ENCODE measurements at regions of chr7 and their contacts with region 1.

Region 1: GRCh38 chr7:25125137-25125946 is at the start of gene CYCS:
- DNase-seq: peak; percentile 100
- H3K4me3 Mint-ChIP-seq: peak within 1 kb of the TSS; percentile 100
- H3K27ac Mint-ChIP-seq: peak within 1 kb of the TSS; percentile 100
- H3K4me1 Mint-ChIP-seq: peaks cover 24% of the 10 kb centered on the region
- H3K27me3 Mint-ChIP-seq: no peaks in the 10 kb centered on the region
- total RNA-seq, gene CYCS: 199 to 207 TPM

Region 2: GRCh38 chr7:25028370-25029021 is 96.8 kb before region 1 on chr7:
- CTCF ChIA-PET with region 1: no interaction called
- POLR2A ChIA-PET with region 1: no interaction called
- intact Hi-C with region 1: loop called (anchors 2 kb)
- DNase-seq: peak; percentile 42
- H3K4me3 Mint-ChIP-seq: peak overlapping the region; percentile 0
- H3K27ac Mint-ChIP-seq: peak overlapping the region; percentile 70
- H3K4me1 Mint-ChIP-seq: peaks cover 48% of the 10 kb centered on the region
- H3K27me3 Mint-ChIP-seq: no peaks in the 10 kb centered on the region

Region 3: GRCh38 chr7:25148772-25149575 is 23.6 kb after region 1 on chr7:
- CTCF ChIA-PET with region 1: interaction called, 4 read pairs
- POLR2A ChIA-PET with region 1: no interaction called
- intact Hi-C with region 1: loop called (anchors 2 kb)
- DNase-seq: no peak
- H3K4me3 Mint-ChIP-seq: no peak overlapping the region
- H3K27ac Mint-ChIP-seq: no peak overlapping the region
- H3K4me1 Mint-ChIP-seq: peaks cover 15% of the 10 kb centered on the region
- H3K27me3 Mint-ChIP-seq: no peaks in the 10 kb centered on the region

Region 4: GRCh38 chr7:25158966-25159365 is 33.6 kb after region 1 on chr7:
- CTCF ChIA-PET with region 1: interaction called, 5 read pairs
- POLR2A ChIA-PET with region 1: no interaction called
- intact Hi-C with region 1: loop called (anchors 2 kb)
- DNase-seq: no peak
- H3K4me3 Mint-ChIP-seq: no peak overlapping the region
- H3K27ac Mint-ChIP-seq: no peak overlapping the region
- H3K4me1 Mint-ChIP-seq: peaks cover 2% of the 10 kb centered on the region
- H3K27me3 Mint-ChIP-seq: no peaks in the 10 kb centered on the region

Region 5: GRCh38 chr7:25179771-25180591 is 54.6 kb after region 1 on chr7:
- CTCF ChIA-PET with region 1: interaction called, 5 read pairs
- POLR2A ChIA-PET with region 1: interaction called, 3 read pairs
- intact Hi-C with region 1: loop called (anchors 1 kb)
- DNase-seq: peak; percentile 96
- H3K4me3 Mint-ChIP-seq: peak overlapping the region; percentile 79
- H3K27ac Mint-ChIP-seq: peak overlapping the region; percentile 73
- H3K4me1 Mint-ChIP-seq: peaks cover 17% of the 10 kb centered on the region
- H3K27me3 Mint-ChIP-seq: no peaks in the 10 kb centered on the region